HAP-1 (cell line): ENCODE measurements at regions of chr2 and their contacts with region 1.

Region 1: GRCh38 chr2:69914170-69914960 is 544 bp upstream of the MXD1 start:
- DNase-seq: peak; percentile 100
- H3K4me3 ChIP-seq: peak overlapping the region; percentile 91
- H3K4me1 ChIP-seq: peaks cover 14% of the 10 kb centered on the region
- H3K27me3 ChIP-seq: no peaks in the 10 kb centered on the region

Region 2: DNA sequence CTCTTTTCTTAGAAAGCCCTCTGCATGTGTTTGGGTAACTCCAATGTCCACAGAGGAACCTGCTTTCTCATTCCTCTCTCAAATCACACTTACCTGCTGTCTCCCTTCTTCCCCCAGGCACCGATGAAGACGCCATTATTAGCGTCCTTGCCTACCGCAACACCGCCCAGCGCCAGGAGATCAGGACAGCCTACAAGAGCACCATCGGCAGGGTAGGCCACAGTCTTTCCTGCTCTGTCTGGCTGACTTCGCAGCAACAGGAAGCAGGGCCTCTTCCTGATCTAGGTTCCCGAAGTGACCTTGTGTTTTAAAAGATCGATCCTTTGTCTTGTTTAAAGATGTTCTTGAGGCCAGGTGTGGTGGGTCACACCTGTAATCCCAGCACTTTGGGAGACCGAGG is 109.9 kb before region 1 on chr2:
- in situ Hi-C with region 1: no loop called
- DNase-seq: no peak
- H3K4me3 ChIP-seq: no peak overlapping the region
- H3K4me1 ChIP-seq: no peaks in the 10 kb centered on the region
- H3K27me3 ChIP-seq: no peaks in the 10 kb centered on the region

Region 3: DNA sequence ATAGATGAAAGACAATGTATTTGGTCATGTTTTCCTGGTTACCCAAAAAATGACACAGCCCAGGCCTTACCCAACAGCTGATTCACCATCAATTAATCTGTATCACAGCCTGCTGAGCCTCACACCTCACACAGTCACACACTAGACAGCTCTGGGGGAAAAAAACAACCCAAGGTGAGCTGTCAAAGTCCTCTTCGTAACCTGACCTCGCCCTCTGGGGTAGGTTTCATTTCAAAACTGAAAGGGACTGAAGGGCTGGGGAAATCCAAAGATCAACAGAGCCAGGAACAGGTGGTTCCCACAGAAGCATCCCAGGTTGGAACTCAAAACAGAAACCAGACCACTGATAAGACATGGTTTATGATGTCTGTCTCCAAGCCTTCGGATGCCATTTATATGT is 154.7 kb after region 1 on chr2:
- in situ Hi-C with region 1: loop called (anchors 10 kb)
- DNase-seq: no peak
- H3K4me3 ChIP-seq: no peak overlapping the region
- H3K4me1 ChIP-seq: no peaks in the 10 kb centered on the region
- H3K27me3 ChIP-seq: no peaks in the 10 kb centered on the region

Region 4: DNA sequence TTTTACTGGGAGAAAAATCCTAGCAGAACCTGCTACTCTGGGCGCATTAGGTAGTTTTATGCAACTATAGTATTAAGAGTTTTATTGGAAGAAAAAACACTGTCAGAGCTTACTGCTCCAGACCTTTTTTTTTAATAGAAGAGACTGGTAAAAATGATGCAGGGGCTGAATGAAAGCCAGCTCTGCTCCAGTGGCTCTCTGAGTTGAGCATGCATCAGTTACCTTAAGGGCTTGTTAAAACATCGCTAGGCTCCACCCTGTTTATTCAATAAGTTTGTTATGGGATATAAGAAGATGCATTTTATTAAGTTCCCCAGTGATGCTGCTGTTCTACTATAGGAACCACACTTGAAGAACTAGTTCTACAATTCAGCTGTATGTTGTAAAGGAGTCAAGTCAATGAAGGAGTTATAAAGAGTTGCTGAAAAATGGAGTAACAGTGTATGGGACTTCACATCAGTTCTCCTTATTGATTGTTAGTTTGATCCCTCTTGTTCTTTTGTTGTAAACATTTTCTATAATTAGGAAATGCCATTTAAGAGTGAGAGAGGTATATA is 366.0 kb after region 1 on chr2:
- in situ Hi-C with region 1: loop called (anchors 25 kb)
- DNase-seq: no peak
- H3K4me3 ChIP-seq: no peak overlapping the region
- H3K4me1 ChIP-seq: peaks cover 14% of the 10 kb centered on the region
- H3K27me3 ChIP-seq: no peaks in the 10 kb centered on the region

Region 5: GRCh38 chr2:70647873-70648481 is 733.6 kb after region 1 on chr2:
- in situ Hi-C with region 1: loop called (anchors 25 kb)
- DNase-seq: peak; percentile 59 to 86
- H3K4me3 ChIP-seq: no peak overlapping the region
- H3K4me1 ChIP-seq: 0 out of 2 replicates have a peak, but pooled peaks cover 1% of the 10 kb centered on the region
- H3K27me3 ChIP-seq: no peaks in the 10 kb centered on the region